ENCODE measurements at regions of chr4 and their contacts with region 1.

Region 1: DNA sequence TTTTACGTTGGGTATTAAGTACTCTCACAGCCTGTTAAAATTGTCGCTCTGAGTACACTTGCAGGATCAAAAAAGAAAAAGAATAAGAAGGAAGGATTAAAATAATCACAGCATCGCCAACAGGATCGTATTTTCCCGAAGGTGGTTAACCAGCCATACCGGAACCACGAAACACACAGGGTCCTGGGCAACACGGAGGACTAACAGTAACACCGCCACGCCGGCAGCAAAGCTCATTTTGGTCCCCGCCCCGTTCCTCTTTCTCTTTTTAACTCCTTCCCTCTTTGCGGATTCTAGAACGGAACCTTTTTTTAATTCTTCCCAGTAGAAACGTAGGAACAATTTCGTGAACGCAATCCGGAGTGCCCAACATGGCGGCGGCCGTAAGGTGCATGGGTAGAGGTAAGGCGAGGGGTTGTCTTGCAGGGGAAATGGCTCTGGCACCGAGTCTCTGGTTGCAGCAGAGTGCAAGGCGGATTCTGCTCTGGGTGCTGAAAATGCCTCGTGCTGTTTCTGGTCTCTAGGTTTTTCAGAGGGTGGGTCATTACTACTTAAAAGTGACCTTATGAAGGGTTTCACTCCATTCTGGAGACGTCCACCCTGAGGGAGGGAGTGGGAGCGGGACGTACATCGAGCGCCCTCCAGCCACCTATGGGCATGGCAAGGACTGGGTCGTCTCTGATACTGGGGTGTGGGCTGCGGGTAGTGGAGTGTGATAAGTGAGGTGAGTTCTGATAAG is at the start of gene MRPL1:
- DNase-seq: peak; percentile 70 to 95 (median 86)
- ATAC-seq: peak; percentile 79 to 88 (median 85)
- H3K4me3 ChIP-seq: peak within 1 kb of the TSS; percentile 78 to 92
- H3K4me3 Mint-ChIP-seq: peak within 1 kb of the TSS; percentile 91 to 93 (median 92)
- H3K27ac ChIP-seq: peak within 1 kb of the TSS; percentile 99
- H3K27ac Mint-ChIP-seq: peak within 1 kb of the TSS; percentile 99
- H3K4me1 ChIP-seq: peaks cover 27 to 39% of the 10 kb centered on the region in 2 experiments
- H3K4me1 Mint-ChIP-seq: peaks cover 67 to 71% (median 70%) of the 10 kb centered on the region in 3 donors
- H3K27me3 ChIP-seq: no peaks in the 10 kb centered on the region
- H3K27me3 Mint-ChIP-seq: peaks cover 0 to 1% of the 10 kb centered on the region in 2 donors
- total RNA-seq, gene MRPL1: 16.9 to 27.2 (median 21.0) TPM

Region 2: GRCh38 chr4:77745792-77746191 is 116.9 kb before region 1 on chr4:
- CTCF ChIA-PET with region 1: no interaction called
- POLR2A ChIA-PET with region 1: interaction called in 1 of 2 experiments, 13 read pairs
- DNase-seq: no peak
- ATAC-seq: no peak
- H3K4me3 ChIP-seq: no peak overlapping the region
- H3K4me3 Mint-ChIP-seq: no peak overlapping the region
- H3K27ac ChIP-seq: no peak overlapping the region
- H3K27ac Mint-ChIP-seq: peak overlapping the region in 1 of 2 donors; percentile 39
- H3K4me1 ChIP-seq: no peaks in the 10 kb centered on the region
- H3K4me1 Mint-ChIP-seq: peaks cover 37 to 51% (median 44%) of the 10 kb centered on the region in 3 donors
- H3K27me3 ChIP-seq: no peaks in the 10 kb centered on the region
- H3K27me3 Mint-ChIP-seq: no peaks in the 10 kb centered on the region

Region 3: GRCh38 chr4:77758804-77759203 is 103.8 kb before region 1 on chr4:
- CTCF ChIA-PET with region 1: no interaction called
- POLR2A ChIA-PET with region 1: interaction called in 1 of 2 experiments, 16 read pairs
- DNase-seq: no peak
- ATAC-seq: no peak
- H3K4me3 ChIP-seq: no peak overlapping the region
- H3K4me3 Mint-ChIP-seq: no peak overlapping the region
- H3K27ac ChIP-seq: no peak overlapping the region
- H3K27ac Mint-ChIP-seq: peak overlapping the region in 1 of 2 donors; percentile 0
- H3K4me1 ChIP-seq: no peaks in the 10 kb centered on the region
- H3K4me1 Mint-ChIP-seq: peaks cover 43 to 55% (median 51%) of the 10 kb centered on the region in 3 donors
- H3K27me3 ChIP-seq: no peaks in the 10 kb centered on the region
- H3K27me3 Mint-ChIP-seq: no peaks in the 10 kb centered on the region

Region 4: DNA sequence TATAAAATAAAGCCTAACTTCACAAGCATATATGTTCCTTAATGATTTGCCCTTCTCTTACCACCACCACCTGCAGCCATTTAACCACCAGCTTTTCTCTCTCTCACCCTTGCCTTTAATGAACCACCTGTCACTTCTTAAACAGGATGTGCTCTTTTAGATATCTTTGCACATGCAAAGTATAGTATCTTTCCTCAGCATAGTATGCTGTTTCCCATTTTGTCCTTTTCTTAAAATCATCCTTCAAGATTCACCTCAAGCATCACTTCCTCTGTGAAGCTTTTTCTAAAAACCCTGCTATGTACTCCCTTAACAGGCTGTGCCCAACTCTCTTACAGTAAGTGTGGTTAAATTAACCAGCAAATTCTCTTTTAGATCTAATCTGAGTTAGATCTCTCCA is 35.3 kb before region 1 on chr4:
- CTCF ChIA-PET with region 1: interaction called, 4 to 12 read pairs
- POLR2A ChIA-PET with region 1: interaction called, 6 to 7 read pairs
- DNase-seq: peak in 2 of 35 experiments; percentile 12 to 49
- ATAC-seq: peak; percentile 84 to 92 (median 86)
- H3K4me3 ChIP-seq: no peak overlapping the region
- H3K4me3 Mint-ChIP-seq: peak overlapping the region in 1 of 3 donors; percentile 36
- H3K27ac ChIP-seq: peak overlapping the region; percentile 62
- H3K27ac Mint-ChIP-seq: peak overlapping the region; percentile 87 to 90
- H3K4me1 ChIP-seq: peaks cover 34 to 40% of the 10 kb centered on the region in 2 experiments
- H3K4me1 Mint-ChIP-seq: peaks cover 55 to 61% (median 57%) of the 10 kb centered on the region in 3 donors
- H3K27me3 ChIP-seq: no peaks in the 10 kb centered on the region
- H3K27me3 Mint-ChIP-seq: no peaks in the 10 kb centered on the region